Activated CD4-positive, alpha-beta T cell treated with anti-CD3 and anti-CD28 coated beads for 36 hours (primary cell): ENCODE measurements at regions of chr17 and their contacts with region 1.

Region 1: DNA sequence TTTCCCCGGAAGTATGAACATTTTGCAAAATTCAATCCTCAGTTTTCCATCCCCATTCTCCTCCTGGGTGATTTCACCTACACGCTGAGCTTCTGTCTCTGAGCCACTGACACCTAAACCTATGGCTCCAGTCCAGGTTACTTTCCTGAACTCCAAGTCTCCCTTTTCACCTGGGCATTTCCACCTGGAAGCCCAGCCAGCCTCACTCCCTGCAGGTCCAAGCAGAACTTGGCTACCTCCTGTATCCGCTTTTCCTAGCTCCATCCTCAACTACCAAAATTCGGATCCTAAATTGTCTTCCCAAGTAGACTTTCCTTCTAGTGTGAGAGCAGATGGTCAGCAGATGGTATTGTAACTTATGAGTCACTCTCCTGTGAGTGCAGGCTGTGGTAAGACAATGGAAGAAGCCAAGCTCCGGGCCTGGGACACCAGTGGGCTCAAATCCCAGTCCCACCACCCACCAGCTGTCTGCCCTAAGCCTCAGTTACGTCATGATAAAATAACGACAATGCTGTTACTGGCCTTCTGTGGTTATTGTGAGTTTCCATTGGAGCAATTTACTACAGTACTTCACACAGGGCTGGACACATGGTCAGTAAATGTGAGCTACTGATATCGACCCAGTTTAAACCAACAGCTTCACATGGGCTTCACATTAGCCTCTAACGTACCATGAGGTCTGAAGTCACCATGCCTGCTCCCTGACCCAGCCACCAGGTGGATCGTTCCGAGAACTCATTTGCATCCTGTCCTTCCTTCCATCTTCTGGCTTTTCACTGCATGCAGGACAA is 33.3 kb downstream of the PECAM1 start:
- DNase-seq: no peak
- ATAC-seq: no peak
- H3K4me3 Mint-ChIP-seq: no peak overlapping the region
- H3K27ac Mint-ChIP-seq: no peak overlapping the region
- H3K4me1 Mint-ChIP-seq: peaks cover 10% of the 10 kb centered on the region
- H3K27me3 Mint-ChIP-seq: no peaks in the 10 kb centered on the region

Region 2: GRCh38 chr17:64393000-64393402 is 35.6 kb after region 1 on chr17:
- CTCF ChIA-PET with region 1: no interaction called
- POLR2A ChIA-PET with region 1: interaction called, 4 read pairs
- intact Hi-C with region 1: loop called in 1 of 2 experiments (anchors 5 kb)
- DNase-seq: peak; percentile 60
- ATAC-seq: peak; percentile 64
- H3K4me3 Mint-ChIP-seq: peak overlapping the region; percentile 57
- H3K27ac Mint-ChIP-seq: peak overlapping the region; percentile 68
- H3K4me1 Mint-ChIP-seq: peaks cover 57% of the 10 kb centered on the region
- H3K27me3 Mint-ChIP-seq: no peaks in the 10 kb centered on the region

Region 3: DNA sequence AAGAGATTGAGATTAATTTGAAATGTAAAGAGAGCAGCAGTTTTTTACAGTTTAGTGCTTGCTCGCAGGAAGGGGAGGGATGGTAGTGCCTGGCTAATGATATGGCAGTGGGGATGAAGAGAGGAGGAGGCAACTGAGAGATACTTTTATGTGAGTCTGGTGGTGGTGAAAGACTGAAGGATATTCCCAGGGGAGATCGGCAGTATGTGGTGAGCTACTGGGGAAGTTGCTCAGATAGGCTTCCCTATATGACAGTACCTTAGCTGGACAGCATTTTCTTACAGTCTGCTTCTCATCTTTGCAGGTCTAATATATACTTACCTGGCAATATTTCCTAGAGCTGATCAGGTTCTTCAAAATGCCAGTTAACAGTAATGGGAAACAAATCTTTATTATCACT is 158.0 kb after region 1 on chr17:
- CTCF ChIA-PET with region 1: no interaction called
- POLR2A ChIA-PET with region 1: no interaction called
- intact Hi-C with region 1: no loop called
- DNase-seq: no peak
- ATAC-seq: no peak
- H3K4me3 Mint-ChIP-seq: no peak overlapping the region
- H3K27ac Mint-ChIP-seq: peak overlapping the region; percentile 15
- H3K4me1 Mint-ChIP-seq: peaks cover 24% of the 10 kb centered on the region
- H3K27me3 Mint-ChIP-seq: no peaks in the 10 kb centered on the region